ENCODE measurements at regions of chr3 and their contacts with region 1.

Region 1: DNA sequence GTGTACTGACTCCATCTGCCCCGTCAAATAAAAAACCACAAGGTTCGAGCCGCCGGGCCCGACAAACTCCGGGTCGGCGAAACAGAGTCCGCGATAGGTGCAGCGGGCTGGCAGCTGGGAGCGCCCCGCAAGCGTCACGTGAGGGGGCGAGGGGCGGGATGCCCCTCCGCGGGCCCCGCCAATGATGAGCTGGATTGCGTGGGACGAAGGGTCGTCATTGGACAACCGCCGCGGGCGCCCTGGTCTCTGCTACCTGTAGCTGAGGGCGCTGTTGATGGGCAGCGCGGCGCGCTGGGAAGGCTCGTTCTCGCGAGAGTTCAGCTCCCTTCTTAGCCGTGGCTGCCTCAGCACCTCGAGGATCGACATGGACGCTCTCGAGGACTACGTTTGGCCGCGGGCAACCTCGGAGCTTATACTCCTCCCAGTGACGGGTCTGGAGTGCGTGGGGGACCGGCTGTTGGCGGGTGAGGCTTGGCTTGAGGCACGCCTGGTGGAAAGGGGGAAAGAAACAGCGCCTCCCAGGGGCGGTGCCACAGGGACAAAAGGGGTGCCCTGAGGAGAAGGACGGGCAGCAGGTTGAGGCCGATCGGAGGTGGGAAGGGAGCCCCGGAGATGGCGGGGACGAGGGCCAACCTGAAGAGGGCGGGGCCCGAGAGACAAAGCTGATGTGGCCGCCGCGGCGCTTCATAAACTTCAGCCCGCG is at the start of gene WDR6:
- DNase-seq: peak; percentile 98
- H3K4me3 ChIP-seq: peak within 1 kb of the TSS; percentile 78 to 97
- H3K27ac ChIP-seq: peak within 1 kb of the TSS; percentile 96 to 98
- H3K4me1 ChIP-seq: peaks cover 0 to 21% of the 10 kb centered on the region in 2 experiments; a peak in 2 of 4 replicates
- H3K27me3 ChIP-seq: no peaks in the 10 kb centered on the region
- CTCF ChIP-seq: peak; percentile 60
- EP300 ChIP-seq: no peak
- RAD21 ChIP-seq: no peak
- polyA plus RNA-seq, gene WDR6: 230 and 277 TPM in 2 replicates

Region 2: GRCh38 chr3:48989796-48990635 is 17.2 kb before region 1 on chr3 and contains the start of gene P4HTM:
- CTCF ChIA-PET with region 1: interaction called, 114 read pairs
- POLR2A ChIA-PET with region 1: interaction called, 44 read pairs
- DNase-seq: no peak
- H3K4me3 ChIP-seq: peak within 1 kb of the TSS; percentile 35 to 63; a peak in 3 of 4 replicates
- H3K27ac ChIP-seq: peak within 1 kb of the TSS; percentile 12 to 88; a peak in 3 of 4 replicates
- H3K4me1 ChIP-seq: peaks cover 0 to 2% of the 10 kb centered on the region in 2 experiments; a peak in 1 of 4 replicates
- H3K27me3 ChIP-seq: no peaks in the 10 kb centered on the region
- CTCF ChIP-seq: peak; percentile 34
- EP300 ChIP-seq: peak in 1 of 2 experiments; percentile 26; a peak in 1 of 4 replicates
- RAD21 ChIP-seq: no peak
- polyA plus RNA-seq, gene P4HTM: 21.0 and 21.4 TPM in 2 replicates

Region 3: DNA sequence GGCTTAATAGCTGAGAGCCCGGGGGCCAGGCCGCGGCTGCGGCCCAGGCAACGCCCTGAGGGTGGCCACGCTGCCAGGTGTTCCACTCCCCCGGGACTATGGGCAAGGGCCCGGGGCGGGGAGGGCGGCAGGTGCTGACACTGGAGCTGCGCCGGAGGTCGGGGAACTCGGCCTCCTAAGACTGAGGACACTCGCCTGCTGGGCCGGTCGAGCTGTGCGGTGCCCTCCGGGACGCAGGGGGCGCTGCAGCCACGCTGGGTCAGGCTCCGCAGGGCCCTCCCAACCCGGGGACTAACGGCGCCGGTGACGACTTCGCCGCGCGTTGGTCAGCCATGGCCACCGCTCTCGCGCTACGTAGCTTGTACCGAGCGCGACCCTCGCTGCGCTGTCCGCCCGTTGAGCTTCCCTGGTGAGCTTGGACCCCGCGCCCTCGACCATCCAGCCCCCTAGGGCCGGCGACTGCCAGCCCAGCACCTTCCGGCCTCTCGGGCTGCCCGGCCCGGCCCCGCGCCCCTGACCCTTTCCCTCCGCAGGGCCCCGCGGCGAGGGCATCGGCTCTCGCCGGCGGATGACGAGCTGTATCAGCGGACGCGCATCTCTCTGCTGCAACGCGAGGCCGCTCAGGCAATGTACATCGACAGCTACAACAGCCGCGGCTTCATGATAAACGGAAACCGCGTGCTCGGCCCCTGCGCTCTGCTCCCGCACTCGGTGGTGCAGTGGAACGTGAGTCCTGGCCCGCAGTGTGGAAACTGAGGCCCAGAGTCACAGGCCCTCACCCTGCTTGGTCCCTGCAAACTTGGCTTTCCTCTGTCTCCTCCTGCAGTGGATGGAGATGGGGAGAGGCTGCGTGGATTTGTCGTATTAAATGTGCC is 14.8 kb after region 1 on chr3 and contains the start of gene NDUFAF3:
- CTCF ChIA-PET with region 1: interaction called, 39 read pairs
- POLR2A ChIA-PET with region 1: interaction called, 80 read pairs
- DNase-seq: peak; percentile 95
- H3K4me3 ChIP-seq: peak within 1 kb of the TSS; percentile 87 to 94
- H3K27ac ChIP-seq: peak within 1 kb of the TSS; percentile 99
- H3K4me1 ChIP-seq: peaks cover under 1 to 35% of the 10 kb centered on the region in 2 experiments; a peak in 1 of 4 replicates
- H3K27me3 ChIP-seq: no peaks in the 10 kb centered on the region
- CTCF ChIP-seq: peak; percentile 88
- EP300 ChIP-seq: peak in 1 of 2 experiments; percentile 33; a peak in 1 of 4 replicates
- RAD21 ChIP-seq: 0 out of 2 replicates have a peak, but pooled peaks have one; percentile 19
- polyA plus RNA-seq, gene NDUFAF3: 85.3 and 104 TPM in 2 replicates

Region 4: DNA sequence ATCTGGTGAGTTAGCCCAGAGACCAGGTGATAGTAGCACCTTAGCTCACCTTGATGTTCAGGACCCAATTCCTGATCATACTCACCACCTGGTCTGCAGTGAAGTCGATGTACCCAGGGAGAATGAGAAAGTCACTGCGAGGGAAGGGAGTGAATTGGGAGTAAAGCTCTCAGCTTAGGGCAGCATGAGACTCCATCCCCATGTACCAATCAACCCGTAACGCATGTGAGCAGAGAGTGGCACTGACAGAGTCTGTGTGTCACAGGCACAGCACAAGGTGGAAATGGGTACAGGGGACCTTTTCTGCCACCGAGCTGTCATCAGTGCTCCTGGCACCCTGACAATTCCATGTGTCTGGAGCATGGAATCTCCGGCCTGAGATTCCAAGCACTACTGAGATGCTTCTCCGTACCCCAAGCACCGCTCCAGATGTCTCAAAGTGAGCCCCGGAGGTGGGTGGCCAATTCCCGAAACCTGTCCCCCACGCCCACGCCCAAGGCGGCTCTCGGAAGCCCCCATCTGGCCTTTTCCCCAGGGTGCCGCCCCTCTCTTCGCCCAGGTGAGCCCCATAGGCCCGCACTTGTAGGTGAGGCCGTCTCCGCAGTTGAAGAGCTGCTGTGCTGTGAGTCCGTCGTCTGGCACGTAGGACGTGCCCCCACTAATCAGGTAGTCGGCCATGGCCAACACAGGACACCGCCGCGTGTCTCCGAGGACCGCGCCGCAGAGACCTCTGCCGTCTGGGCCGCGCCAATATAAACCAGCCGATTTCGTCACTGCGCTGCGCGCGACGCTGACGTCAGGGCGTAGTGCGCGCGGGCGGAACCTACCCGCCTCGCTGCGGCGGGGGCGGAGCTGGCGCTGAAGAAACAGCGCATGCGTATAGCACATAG is 21.7 kb after region 1 on chr3 and contains the start of gene IMPDH2:
- CTCF ChIA-PET with region 1: interaction called, 22 read pairs
- POLR2A ChIA-PET with region 1: interaction called, 14 read pairs
- DNase-seq: peak; percentile 92
- H3K4me3 ChIP-seq: peak within 1 kb of the TSS; percentile 83 to 87
- H3K27ac ChIP-seq: peak within 1 kb of the TSS; percentile 69 to 82
- H3K4me1 ChIP-seq: peaks cover 10 to 32% of the 10 kb centered on the region in 2 experiments; a peak in 3 of 4 replicates
- H3K27me3 ChIP-seq: no peaks in the 10 kb centered on the region
- CTCF ChIP-seq: 0 out of 2 replicates have a peak, but pooled peaks have one; percentile 11
- EP300 ChIP-seq: no peak
- RAD21 ChIP-seq: no peak
- polyA plus RNA-seq, gene IMPDH2: 305 and 346 TPM in 2 replicates

Measured in SK-N-SH (cell line).